HEK293 (cell line): ENCODE measurements at regions of chr2 and their contacts with region 1.

Region 1: DNA sequence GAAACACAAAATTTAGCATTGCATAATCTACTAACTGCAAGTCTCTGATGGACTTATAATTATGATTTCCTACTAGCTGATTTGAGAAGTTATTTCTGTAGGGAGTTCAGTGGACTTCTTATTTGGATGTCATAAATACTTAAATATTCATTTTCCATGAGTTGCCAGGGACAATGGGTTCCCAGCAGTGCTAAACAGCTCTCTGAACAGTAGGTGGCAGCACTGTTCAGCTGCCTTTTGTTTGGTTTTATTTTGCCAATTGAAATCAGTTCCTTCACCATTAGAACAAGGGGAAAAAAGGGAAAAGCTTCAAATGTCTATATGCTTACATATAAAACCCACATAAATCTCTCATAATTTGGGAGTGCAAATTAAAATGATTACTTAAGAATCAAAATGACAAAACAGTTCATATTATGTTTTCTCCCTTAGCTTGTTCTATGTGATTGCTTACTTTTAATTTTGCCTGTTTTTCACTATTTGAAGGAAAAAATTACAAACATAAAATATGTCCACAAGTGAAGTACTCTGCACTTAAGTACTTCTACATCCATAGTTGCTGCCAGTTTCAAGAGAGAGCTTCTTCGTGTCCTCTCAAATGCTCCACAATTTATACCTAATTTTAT is 898.9 kb downstream of the CPS1 start:
- H3K4me3 ChIP-seq: no peak overlapping the region
- H3K27ac ChIP-seq: no peak overlapping the region
- H3K4me1 ChIP-seq: no peaks in the 10 kb centered on the region
- CTCF ChIP-seq: peak; percentile 32

Region 2: DNA sequence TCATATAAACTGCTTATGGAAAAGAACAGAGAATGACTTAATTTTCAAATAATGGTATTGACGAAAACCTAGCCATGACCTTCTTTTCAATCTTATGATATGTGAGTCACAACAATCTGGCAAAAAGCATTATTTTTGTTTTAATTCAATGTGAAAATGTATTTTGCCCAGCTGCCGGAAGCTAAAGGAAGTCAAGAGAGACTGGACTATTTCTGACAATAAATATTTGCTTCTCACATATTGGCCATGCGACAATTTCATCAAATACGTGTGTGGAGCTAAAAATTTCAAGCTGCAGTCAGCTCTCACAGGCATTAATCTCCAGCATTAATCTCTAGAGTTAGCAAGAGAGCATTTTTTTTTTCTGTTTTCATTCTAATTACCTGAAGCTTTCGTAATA is 17.9 kb before region 1 on chr2:
- CTCF ChIA-PET with region 1: interaction called, 12 read pairs
- POLR2A ChIA-PET with region 1: no interaction called
- H3K4me3 ChIP-seq: no peak overlapping the region
- H3K27ac ChIP-seq: no peak overlapping the region
- H3K4me1 ChIP-seq: no peaks in the 10 kb centered on the region
- CTCF ChIP-seq: no peak